Cardiac septum (tissue), 1 donor: ENCODE measurements at regions of chr22 and their contacts with region 1.

Region 1: GRCh38 chr22:36775964-36776669 is at the start of gene IFT27:
- DNase-seq: peak; percentile 98
- total RNA-seq, gene IFT27: 24.7 TPM

Region 2: DNA sequence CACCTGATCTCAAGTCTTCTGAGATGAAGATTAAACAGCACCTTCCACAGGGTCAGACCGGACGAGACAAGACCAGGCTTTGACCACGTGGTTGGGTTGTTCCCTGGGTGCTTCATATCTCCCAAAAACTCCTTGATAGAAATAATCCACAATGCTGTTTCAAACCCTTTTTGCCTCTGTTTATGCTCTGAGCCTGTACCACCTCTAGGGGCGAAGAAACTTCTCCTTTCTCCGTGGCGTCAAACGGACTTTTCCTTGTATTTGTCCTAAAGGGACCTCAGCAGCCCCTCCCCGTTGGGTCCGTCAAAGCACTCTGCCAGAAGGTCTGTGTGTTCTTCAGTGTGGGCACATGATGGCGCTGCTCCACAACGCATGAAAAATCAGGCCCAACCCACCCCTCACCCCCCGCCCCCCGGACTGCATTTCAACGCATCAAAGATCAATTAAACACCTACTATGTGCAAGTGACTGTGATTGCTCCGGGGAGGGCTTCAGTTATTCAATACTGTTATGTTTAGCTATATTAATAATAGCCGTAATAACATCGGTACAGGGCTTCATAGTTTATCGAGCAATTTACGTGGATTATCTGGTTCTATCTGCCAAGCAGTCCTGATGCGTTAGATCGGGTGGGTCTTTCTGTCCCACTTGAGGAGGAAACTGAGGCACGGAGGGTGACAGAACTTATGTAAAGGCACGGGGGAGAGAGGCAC is 229.9 kb before region 1 on chr22:
- intact Hi-C with region 1: loop called (anchors 10 kb)
- DNase-seq: no peak

Region 3: DNA sequence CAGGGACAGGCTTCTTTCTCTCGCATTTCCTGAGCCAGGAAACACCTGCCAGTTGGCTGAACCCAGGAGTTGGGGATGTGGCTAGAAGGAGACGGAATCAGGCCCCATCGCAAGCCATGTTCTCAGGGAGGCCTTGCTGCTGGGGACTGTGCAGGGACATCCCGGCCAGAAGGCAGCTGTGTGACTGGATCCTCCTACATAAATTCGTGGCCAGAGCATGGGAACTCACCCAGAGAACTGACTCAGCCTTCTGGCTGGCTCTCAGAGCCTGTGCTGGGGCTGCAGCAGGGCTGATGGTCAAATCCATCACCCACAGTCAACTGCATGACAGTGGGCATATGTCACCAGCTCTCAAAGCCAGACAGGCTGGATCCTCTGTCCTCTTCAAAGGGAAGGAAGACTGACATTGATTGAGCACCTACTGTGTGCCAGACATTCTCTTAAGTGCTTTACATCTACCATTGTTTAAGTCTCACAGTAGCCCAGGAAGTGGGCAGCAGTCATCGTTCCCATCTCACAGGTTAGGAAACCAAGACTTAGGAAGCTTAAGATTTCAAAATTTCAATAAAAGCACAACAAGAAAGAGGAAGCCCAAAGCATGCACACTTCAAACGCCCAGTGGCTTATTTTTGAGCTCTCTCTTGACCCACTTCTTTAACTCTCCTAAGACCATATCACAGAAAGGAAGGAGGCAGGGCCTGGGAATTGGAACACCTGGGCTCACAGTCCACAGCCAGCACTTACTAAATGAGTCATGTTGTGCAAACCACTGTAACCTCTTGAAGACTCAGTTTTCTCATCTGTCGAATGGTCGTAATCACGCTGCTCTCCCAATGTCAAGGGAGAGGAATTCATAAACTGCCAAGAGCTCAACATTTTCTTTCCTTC is 41.7 kb before region 1 on chr22:
- intact Hi-C with region 1: no loop called
- DNase-seq: peak; percentile 51